ENCODE measurements at regions of chr2 and their contacts with region 1.

Region 1: GRCh38 chr2:105744091-105744908 is 412 bp upstream of the NCK2 start:
- DNase-seq: peak; percentile 79
- ATAC-seq: peak; percentile 42
- H3K4me3 Mint-ChIP-seq: peak overlapping the region; percentile 77
- H3K27ac Mint-ChIP-seq: peak overlapping the region; percentile 87
- H3K4me1 Mint-ChIP-seq: peaks cover 70% of the 10 kb centered on the region
- H3K27me3 Mint-ChIP-seq: no peaks in the 10 kb centered on the region

Region 2: GRCh38 chr2:104332743-104333142 is 1411.6 kb before region 1 on chr2:
- CTCF ChIA-PET with region 1: no interaction called
- POLR2A ChIA-PET with region 1: no interaction called
- intact Hi-C with region 1: no loop called
- DNase-seq: no peak
- ATAC-seq: no peak
- H3K4me3 Mint-ChIP-seq: no peak overlapping the region
- H3K27ac Mint-ChIP-seq: no peak overlapping the region
- H3K4me1 Mint-ChIP-seq: no peaks in the 10 kb centered on the region
- H3K27me3 Mint-ChIP-seq: peaks cover 5% of the 10 kb centered on the region

Region 3: GRCh38 chr2:105337124-105338019 is 406.9 kb before region 1 on chr2 and contains the start of gene C2orf49:
- CTCF ChIA-PET with region 1: no interaction called
- POLR2A ChIA-PET with region 1: no interaction called
- intact Hi-C with region 1: loop called (anchors 5 to 10 kb)
- DNase-seq: peak; percentile 94
- ATAC-seq: peak; percentile 93
- H3K4me3 Mint-ChIP-seq: peak within 1 kb of the TSS; percentile 91
- H3K27ac Mint-ChIP-seq: peak within 1 kb of the TSS; percentile 100
- H3K4me1 Mint-ChIP-seq: peaks cover 27% of the 10 kb centered on the region
- H3K27me3 Mint-ChIP-seq: no peaks in the 10 kb centered on the region
- total RNA-seq, gene C2orf49: 19.3 to 27.8 TPM

Region 4: DNA sequence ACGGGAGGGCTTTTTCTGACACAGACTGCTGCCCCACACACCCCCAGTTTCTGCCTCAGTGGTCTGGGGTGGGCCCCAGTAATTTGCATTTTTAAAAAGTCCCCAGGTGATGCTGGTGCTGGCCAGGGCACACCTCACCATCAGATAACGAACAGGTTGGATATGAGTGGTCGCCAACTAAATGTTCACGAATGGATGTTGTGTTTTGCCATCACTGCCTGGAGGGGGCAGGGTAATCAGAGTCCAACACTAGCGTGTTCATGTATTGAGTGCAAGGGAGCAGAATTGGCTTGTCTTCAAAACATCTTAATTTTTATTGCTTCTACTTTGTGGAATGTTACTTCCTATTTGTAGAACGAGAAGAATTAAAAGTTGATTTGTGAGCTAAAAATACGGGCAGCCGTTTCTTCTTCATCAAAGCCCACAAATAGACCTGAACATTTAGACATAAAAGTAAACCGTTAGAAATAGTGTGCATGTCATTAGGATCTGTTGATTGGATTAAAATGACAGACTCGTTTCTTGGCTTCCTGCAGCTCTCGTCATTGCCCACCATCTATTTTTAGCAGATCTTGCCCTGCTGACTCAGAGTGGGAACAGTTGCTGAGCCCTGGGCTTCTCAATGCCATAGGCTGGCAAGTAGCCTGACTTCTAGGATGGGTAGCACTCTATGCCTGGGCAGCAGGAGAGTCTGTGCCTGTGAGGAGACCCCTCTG is 45.6 kb after region 1 on chr2:
- CTCF ChIA-PET with region 1: interaction called, 6 read pairs
- POLR2A ChIA-PET with region 1: interaction called, 24 read pairs
- intact Hi-C with region 1: loop called in 1 of 2 experiments (anchors 1 kb)
- DNase-seq: peak; percentile 83
- ATAC-seq: peak; percentile 90
- H3K4me3 Mint-ChIP-seq: peak overlapping the region; percentile 61
- H3K27ac Mint-ChIP-seq: peak overlapping the region; percentile 96
- H3K4me1 Mint-ChIP-seq: peaks cover 94% of the 10 kb centered on the region
- H3K27me3 Mint-ChIP-seq: no peaks in the 10 kb centered on the region

Region 5: DNA sequence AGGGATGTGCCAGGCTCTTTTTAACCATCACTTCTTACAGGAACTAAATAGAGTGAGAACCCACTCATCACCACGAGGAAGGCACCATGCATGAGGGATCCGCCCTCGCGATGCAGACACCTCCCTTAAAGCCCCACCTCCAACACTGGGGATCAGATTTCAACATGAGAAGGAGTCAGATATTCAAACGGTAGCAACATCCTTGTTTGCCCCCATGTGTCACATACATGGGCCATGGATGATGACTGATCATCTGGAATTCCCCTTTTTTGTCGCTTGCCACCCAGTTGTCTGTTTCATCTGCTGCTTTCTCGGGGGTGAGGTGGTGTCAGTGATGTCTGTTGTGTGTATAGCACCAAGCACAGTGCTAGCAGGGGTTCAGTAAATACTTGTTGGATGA is 58.3 kb after region 1 on chr2:
- CTCF ChIA-PET with region 1: interaction called, 15 read pairs
- POLR2A ChIA-PET with region 1: interaction called, 33 read pairs
- intact Hi-C with region 1: loop called (anchors 1 to 2 kb)
- DNase-seq: peak; percentile 83
- ATAC-seq: peak; percentile 78
- H3K4me3 Mint-ChIP-seq: peak overlapping the region; percentile 31
- H3K27ac Mint-ChIP-seq: peak overlapping the region; percentile 97
- H3K4me1 Mint-ChIP-seq: peaks cover 96% of the 10 kb centered on the region
- H3K27me3 Mint-ChIP-seq: no peaks in the 10 kb centered on the region

Region 6: DNA sequence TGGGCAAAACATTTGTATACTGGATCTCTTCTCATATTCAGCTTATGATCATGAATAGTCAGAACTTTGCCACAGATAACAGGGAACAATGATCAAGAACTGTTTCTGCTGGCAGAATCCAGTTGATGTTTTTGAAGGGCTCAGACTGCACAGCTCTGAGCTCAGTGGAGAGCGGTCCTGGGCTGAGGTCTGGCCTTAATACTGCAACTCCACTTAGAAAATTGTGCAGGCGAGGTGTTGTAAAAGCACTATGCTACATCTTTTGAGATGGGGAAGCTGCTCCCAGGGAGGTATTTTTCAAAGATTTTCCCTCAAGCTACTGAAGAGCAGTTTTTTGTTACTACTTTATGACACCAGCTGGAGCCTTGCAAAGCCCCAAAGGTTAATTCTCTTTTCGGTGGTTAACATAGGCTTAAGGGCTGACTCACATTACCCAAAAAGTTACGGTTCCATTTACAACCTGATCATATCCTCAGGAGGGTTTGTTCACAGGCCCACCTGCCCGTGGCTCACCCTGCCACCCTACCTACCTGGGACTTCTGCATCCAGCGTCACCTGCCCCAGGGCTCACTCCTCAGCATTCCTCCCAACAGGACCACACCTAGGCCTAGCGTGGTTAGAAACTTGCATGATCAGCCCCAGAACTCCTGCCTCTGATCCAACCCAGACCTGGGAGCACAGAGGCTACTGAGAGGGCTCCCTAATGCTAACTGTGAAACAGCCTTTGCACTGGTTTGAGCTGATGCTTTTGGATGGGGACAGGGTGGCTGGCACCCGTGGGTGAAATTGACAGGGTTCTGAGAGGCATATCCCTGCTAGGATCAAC is 114.8 kb after region 1 on chr2:
- CTCF ChIA-PET with region 1: interaction called, 3 read pairs
- POLR2A ChIA-PET with region 1: interaction called, 3 read pairs
- intact Hi-C with region 1: loop called (anchors 1 to 2 kb)
- DNase-seq: peak; percentile 51
- ATAC-seq: peak; percentile 65
- H3K4me3 Mint-ChIP-seq: peak overlapping the region; percentile 40
- H3K27ac Mint-ChIP-seq: peak overlapping the region; percentile 92
- H3K4me1 Mint-ChIP-seq: peaks cover 93% of the 10 kb centered on the region
- H3K27me3 Mint-ChIP-seq: no peaks in the 10 kb centered on the region

Region 7: DNA sequence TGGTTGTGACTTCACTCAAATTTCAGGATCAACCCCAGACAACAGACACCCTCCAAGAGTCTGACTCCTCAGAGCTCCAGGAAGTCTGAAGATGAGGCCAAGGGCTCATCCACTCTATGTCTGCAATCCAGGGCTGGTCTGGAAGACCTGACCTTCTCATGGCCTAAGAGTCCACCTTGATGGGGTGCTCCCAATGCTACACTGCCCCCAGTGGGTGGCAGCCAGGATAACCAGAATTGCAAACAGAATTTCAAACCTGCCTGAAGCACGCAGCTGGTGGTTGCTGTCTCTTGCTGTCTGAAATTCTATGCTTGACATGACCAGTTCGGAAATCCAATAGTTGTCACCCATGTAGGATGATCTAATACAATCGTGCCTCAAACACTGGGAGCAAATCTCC is 353.8 kb after region 1 on chr2:
- CTCF ChIA-PET with region 1: no interaction called
- POLR2A ChIA-PET with region 1: no interaction called
- intact Hi-C with region 1: loop called in 1 of 2 experiments (anchors 2 kb)
- DNase-seq: peak; percentile 65
- ATAC-seq: no peak
- H3K4me3 Mint-ChIP-seq: no peak overlapping the region
- H3K27ac Mint-ChIP-seq: no peak overlapping the region
- H3K4me1 Mint-ChIP-seq: peaks cover 41% of the 10 kb centered on the region
- H3K27me3 Mint-ChIP-seq: no peaks in the 10 kb centered on the region